CD8-positive, alpha-beta memory T cell (primary cell): ENCODE measurements at regions of chr1 and their contacts with region 1.

Region 1: DNA sequence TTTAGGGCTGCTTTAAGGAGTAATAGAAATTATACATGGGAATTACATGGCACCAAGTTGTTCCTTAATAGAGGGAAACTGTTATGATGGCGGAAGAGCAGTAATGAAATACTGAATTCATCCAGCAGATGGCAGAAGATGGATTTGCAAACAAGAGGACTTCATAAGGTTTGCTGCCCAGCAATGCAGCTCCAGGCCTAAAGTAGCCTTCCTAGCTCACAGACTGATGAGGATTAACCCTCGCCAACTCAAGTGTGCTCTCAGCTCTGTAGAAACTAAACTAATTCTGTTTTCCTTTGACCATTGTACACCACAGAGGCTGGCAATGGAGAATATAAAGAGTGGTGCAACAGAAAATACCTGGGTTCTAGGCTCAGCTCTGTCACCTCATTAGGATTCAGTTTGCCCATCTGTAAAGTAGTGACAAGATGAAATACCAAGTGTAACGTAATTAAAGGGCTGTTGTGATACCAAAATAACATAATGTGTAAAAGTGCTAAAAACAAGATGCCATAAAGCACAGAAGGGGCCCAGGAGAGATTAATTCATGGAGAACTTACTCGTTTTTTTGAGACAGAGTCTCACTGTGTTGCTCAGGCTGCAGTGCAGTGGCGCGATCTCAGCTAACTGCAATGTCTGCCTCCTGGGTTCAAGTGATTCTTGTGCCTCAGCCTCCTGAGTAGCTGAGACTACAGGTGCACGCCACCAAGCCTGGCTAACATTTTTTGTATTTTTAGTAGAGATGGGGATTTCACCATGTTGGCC is 102.4 kb upstream of the SERBP1 start:
- DNase-seq: peak in 2 of 5 donors; percentile 7 to 20
- H3K4me3 ChIP-seq: no peak overlapping the region
- H3K4me3 Mint-ChIP-seq: no peak overlapping the region
- H3K27ac ChIP-seq: no peak overlapping the region
- H3K27ac Mint-ChIP-seq: peak overlapping the region in 1 of 8 donors; percentile 6
- H3K4me1 ChIP-seq: no peaks in the 10 kb centered on the region
- H3K4me1 Mint-ChIP-seq: peaks cover 0 to 2% (median 0%) of the 10 kb centered on the region in 3 donors
- H3K27me3 ChIP-seq: no peaks in the 10 kb centered on the region
- H3K27me3 Mint-ChIP-seq: peaks cover 3 to 12% of the 10 kb centered on the region in 2 donors

Region 2: GRCh38 chr1:67552336-67552759 is 19.7 kb after region 1 on chr1:
- CTCF ChIA-PET with region 1: no interaction called
- POLR2A ChIA-PET with region 1: no interaction called
- DNase-seq: no peak
- H3K4me3 ChIP-seq: no peak overlapping the region
- H3K4me3 Mint-ChIP-seq: no peak overlapping the region
- H3K27ac ChIP-seq: no peak overlapping the region
- H3K27ac Mint-ChIP-seq: no peak overlapping the region
- H3K4me1 ChIP-seq: no peaks in the 10 kb centered on the region
- H3K4me1 Mint-ChIP-seq: no peaks in the 10 kb centered on the region
- H3K27me3 ChIP-seq: no peaks in the 10 kb centered on the region
- H3K27me3 Mint-ChIP-seq: peaks cover 7 to 33% of the 10 kb centered on the region in 2 donors

Region 3: GRCh38 chr1:67766141-67766978 is 233.7 kb after region 1 on chr1:
- CTCF ChIA-PET with region 1: interaction called, 29 read pairs
- POLR2A ChIA-PET with region 1: no interaction called
- DNase-seq: peak in 4 of 5 donors; percentile 10 to 50 (median 27)
- H3K4me3 ChIP-seq: no peak overlapping the region
- H3K4me3 Mint-ChIP-seq: peak overlapping the region in 6 of 7 donors; percentile 30 to 78 (median 67)
- H3K27ac ChIP-seq: no peak overlapping the region
- H3K27ac Mint-ChIP-seq: no peak overlapping the region
- H3K4me1 ChIP-seq: no peaks in the 10 kb centered on the region
- H3K4me1 Mint-ChIP-seq: peaks cover 0 to 4% (median 1%) of the 10 kb centered on the region in 3 donors
- H3K27me3 ChIP-seq: peaks cover 3% of the 10 kb centered on the region
- H3K27me3 Mint-ChIP-seq: peaks cover 11 to 45% of the 10 kb centered on the region in 2 donors